ENCODE measurements at regions of chr11 and their contacts with region 1.

Region 1: GRCh38 chr11:129895126-129896041 is at the start of gene NFRKB:
- DNase-seq: peak; percentile 81 to 89 (median 84)
- H3K4me3 ChIP-seq: peak within 1 kb of the TSS; percentile 61 to 84
- H3K4me3 Mint-ChIP-seq: peak within 1 kb of the TSS; percentile 92 to 94 (median 94)
- H3K27ac ChIP-seq: peak within 1 kb of the TSS; percentile 81
- H3K27ac Mint-ChIP-seq: peak within 1 kb of the TSS; percentile 82 to 93 (median 90)
- H3K4me1 ChIP-seq: peaks cover 29% of the 10 kb centered on the region
- H3K4me1 Mint-ChIP-seq: peaks cover 20 to 51% (median 33%) of the 10 kb centered on the region in 4 donors
- H3K27me3 ChIP-seq: no peaks in the 10 kb centered on the region
- H3K27me3 Mint-ChIP-seq: no peaks in the 10 kb centered on the region
- total RNA-seq, gene NFRKB: 91.9 to 94.9 TPM

Region 2: GRCh38 chr11:129209891-129210830 is 685.2 kb before region 1 on chr11:
- CTCF ChIA-PET with region 1: no interaction called
- POLR2A ChIA-PET with region 1: no interaction called
- intact Hi-C with region 1: no loop called
- DNase-seq: no peak
- H3K4me3 ChIP-seq: no peak overlapping the region
- H3K4me3 Mint-ChIP-seq: no peak overlapping the region
- H3K27ac ChIP-seq: no peak overlapping the region
- H3K27ac Mint-ChIP-seq: no peak overlapping the region
- H3K4me1 ChIP-seq: no peaks in the 10 kb centered on the region
- H3K4me1 Mint-ChIP-seq: peaks cover 0 to 3% (median 0%) of the 10 kb centered on the region in 4 donors
- H3K27me3 ChIP-seq: no peaks in the 10 kb centered on the region
- H3K27me3 Mint-ChIP-seq: peaks cover 2 to 4% of the 10 kb centered on the region in 2 donors

Region 3: GRCh38 chr11:129766898-129767604 is 128.3 kb before region 1 on chr11:
- CTCF ChIA-PET with region 1: interaction called, 3 read pairs
- POLR2A ChIA-PET with region 1: no interaction called
- intact Hi-C with region 1: loop called (anchors 1 kb)
- DNase-seq: peak in 4 of 5 donors; percentile 12 to 39 (median 22)
- H3K4me3 ChIP-seq: no peak overlapping the region
- H3K4me3 Mint-ChIP-seq: peak overlapping the region in 3 of 8 donors; percentile 37 to 73 (median 52)
- H3K27ac ChIP-seq: no peak overlapping the region
- H3K27ac Mint-ChIP-seq: peak overlapping the region in 2 of 7 donors; percentile 26 to 61
- H3K4me1 ChIP-seq: no peaks in the 10 kb centered on the region
- H3K4me1 Mint-ChIP-seq: peaks cover 0 to 4% (median 4%) of the 10 kb centered on the region in 4 donors
- H3K27me3 ChIP-seq: no peaks in the 10 kb centered on the region
- H3K27me3 Mint-ChIP-seq: peaks cover 0 to 2% of the 10 kb centered on the region in 2 donors

Region 4: DNA sequence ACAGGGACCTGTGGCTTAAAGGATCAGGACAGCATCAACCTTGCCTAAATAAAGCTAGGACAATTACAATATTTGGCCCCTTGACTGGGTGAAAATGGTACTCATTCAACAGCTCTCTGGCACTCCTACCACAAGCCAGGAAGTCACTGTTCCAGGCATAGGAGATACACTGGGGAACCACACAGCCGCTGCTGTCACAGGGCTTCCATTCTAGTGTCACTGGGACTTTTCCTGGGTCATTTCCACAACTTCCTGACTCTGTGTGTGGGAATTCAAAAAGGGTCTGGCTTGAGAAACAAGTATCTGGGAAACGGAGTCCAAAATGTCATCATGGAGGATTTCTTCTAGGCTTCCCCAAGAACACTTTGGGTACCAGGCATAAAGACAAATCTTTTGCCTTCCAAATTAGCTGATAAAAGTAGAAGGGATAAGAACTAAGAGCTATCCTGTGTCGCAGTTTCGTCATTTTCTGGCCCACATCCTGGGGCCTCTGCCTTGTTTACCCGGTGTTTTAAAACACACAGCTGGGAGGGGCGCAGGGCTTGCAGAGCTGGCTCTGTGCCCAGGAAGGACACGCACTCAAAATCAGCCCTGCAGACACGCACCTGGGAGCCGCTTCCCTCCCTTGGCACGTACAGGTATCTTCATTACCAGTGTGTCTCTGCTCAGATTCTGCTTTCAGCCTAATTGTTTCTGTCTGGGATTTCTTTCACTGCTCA is 41.7 kb before region 1 on chr11:
- CTCF ChIA-PET with region 1: interaction called, 3 read pairs
- POLR2A ChIA-PET with region 1: interaction called, 29 read pairs
- intact Hi-C with region 1: loop called (anchors 2 kb)
- DNase-seq: peak; percentile 88 to 93 (median 90)
- H3K4me3 ChIP-seq: peak overlapping the region in 1 of 2 donors; percentile 28
- H3K4me3 Mint-ChIP-seq: peak overlapping the region; percentile 73 to 89 (median 82)
- H3K27ac ChIP-seq: peak overlapping the region; percentile 51
- H3K27ac Mint-ChIP-seq: peak overlapping the region; percentile 94 to 100 (median 99)
- H3K4me1 ChIP-seq: peaks cover 42% of the 10 kb centered on the region
- H3K4me1 Mint-ChIP-seq: peaks cover 38 to 62% (median 40%) of the 10 kb centered on the region in 4 donors
- H3K27me3 ChIP-seq: no peaks in the 10 kb centered on the region
- H3K27me3 Mint-ChIP-seq: no peaks in the 10 kb centered on the region

Region 5: DNA sequence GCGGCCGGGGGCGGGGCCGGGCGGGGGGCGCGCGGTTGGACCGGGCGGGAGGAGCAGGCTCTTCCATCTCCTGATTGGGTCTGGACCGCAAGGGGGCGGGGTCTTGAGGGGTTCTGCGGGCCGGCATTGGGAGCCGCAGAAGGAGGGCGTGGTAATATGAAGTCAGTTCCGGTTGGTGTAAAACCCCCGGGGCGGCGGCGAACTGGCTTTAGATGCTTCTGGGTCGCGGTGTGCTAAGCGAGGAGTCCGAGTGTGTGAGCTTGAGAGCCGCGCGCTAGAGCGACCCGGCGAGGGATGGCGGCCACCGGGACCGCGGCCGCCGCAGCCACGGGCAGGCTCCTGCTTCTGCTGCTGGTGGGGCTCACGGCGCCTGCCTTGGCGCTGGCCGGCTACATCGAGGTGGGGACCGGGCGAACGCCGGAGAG is 174.3 kb after region 1 on chr11 and contains the start of gene APLP2:
- CTCF ChIA-PET with region 1: no interaction called
- POLR2A ChIA-PET with region 1: no interaction called
- intact Hi-C with region 1: loop called (anchors 1 kb)
- DNase-seq: peak; percentile 96 to 99 (median 96)
- H3K4me3 ChIP-seq: peak within 1 kb of the TSS; percentile 65 to 89
- H3K4me3 Mint-ChIP-seq: peak within 1 kb of the TSS; percentile 93 to 99 (median 98)
- H3K27ac ChIP-seq: peak within 1 kb of the TSS; percentile 74
- H3K27ac Mint-ChIP-seq: peak within 1 kb of the TSS; percentile 94 to 98 (median 97)
- H3K4me1 ChIP-seq: peaks cover 17% of the 10 kb centered on the region
- H3K4me1 Mint-ChIP-seq: peaks cover 16 to 33% (median 20%) of the 10 kb centered on the region in 4 donors
- H3K27me3 ChIP-seq: no peaks in the 10 kb centered on the region
- H3K27me3 Mint-ChIP-seq: no peaks in the 10 kb centered on the region
- total RNA-seq, gene APLP2: 58.7 to 65.3 TPM

Measured in CD4-positive, alpha-beta memory T cell (primary cell).